PC-3 (cell line): ENCODE measurements at regions of chr14 and their contacts with region 1.

Region 1: GRCh38 chr14:63614679-63615363 is 26.9 kb downstream of the WDR89 start:
- DNase-seq: peak; percentile 38
- ATAC-seq: peak; percentile 89
- H3K4me3 ChIP-seq: no peak overlapping the region
- H3K27ac ChIP-seq: no peak overlapping the region
- H3K4me1 ChIP-seq: peaks cover 12% of the 10 kb centered on the region
- H3K27me3 ChIP-seq: no peaks in the 10 kb centered on the region
- CTCF ChIP-seq: no peak

Region 2: DNA sequence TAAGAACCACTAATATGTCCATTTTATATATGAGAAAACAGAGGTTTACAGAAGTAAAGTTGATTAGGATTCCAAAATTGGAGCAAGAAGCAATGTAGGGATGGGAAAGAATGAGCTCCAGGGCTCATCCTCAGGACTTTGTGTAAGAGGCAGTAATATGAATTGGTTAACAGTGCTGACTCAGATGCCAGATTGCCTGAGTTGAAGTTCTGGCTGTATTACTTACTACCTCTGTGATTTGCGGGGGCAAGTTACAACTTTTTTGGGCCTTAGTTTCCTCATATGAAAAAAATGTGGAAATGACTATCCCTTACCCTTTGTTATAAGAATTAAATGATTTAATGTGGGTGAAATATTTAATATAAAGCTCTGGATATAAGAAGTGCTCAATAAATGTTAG is 36.5 kb before region 1 on chr14:
- CTCF ChIA-PET with region 1: no interaction called
- POLR2A ChIA-PET with region 1: no interaction called
- intact Hi-C with region 1: no loop called
- DNase-seq: no peak
- ATAC-seq: no peak
- H3K4me3 ChIP-seq: no peak overlapping the region
- H3K27ac ChIP-seq: no peak overlapping the region
- H3K4me1 ChIP-seq: no peaks in the 10 kb centered on the region
- H3K27me3 ChIP-seq: no peaks in the 10 kb centered on the region
- CTCF ChIP-seq: no peak

Region 3: DNA sequence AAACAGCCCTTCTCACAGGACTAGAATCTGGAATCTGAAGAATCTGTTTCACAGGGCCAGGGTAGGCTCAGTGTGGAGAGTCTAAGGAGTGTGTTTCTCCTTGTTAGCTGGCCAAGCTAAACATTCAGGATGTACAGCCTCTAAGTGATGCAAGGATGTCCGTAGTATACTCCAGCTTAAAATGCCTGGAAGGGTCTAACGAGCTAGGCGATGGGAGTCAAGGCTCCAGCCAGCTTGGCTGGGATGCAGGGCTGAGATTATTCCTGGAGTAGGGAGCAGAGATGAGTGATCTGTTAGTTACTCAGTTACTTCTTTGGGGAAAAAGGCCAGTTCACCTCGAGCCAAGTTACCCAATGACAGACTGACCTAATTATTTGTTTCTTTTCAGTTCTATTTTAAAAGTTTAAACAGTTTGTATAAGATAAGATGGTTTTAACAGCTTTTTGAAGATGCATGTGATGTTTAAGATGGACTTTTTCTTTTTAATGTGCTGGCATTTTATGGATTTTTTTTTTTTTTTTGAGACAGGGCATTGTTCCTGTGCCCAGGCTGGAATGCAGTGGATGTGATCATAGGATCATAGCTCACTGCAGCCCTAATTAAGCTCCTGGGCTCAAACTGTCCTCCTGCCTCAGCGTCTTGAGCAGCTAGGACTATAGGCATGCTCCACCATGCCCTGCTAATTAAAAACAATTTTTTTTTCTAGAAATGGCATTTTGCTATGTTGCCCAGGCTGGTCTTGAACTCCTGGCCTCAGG is 279.1 kb after region 1 on chr14:
- CTCF ChIA-PET with region 1: interaction called, 21 read pairs
- POLR2A ChIA-PET with region 1: no interaction called
- intact Hi-C with region 1: no loop called
- DNase-seq: no peak
- ATAC-seq: 0 out of 2 replicates have a peak, but pooled peaks have one; percentile 5
- H3K4me3 ChIP-seq: no peak overlapping the region
- H3K27ac ChIP-seq: no peak overlapping the region
- H3K4me1 ChIP-seq: peaks cover 9% of the 10 kb centered on the region; the same call in 1 of the 2 replicates
- H3K27me3 ChIP-seq: no peaks in the 10 kb centered on the region
- CTCF ChIP-seq: no peak